AG04449 (cell line): ENCODE measurements at regions of chr19 and their contacts with region 1.

Region 1: DNA sequence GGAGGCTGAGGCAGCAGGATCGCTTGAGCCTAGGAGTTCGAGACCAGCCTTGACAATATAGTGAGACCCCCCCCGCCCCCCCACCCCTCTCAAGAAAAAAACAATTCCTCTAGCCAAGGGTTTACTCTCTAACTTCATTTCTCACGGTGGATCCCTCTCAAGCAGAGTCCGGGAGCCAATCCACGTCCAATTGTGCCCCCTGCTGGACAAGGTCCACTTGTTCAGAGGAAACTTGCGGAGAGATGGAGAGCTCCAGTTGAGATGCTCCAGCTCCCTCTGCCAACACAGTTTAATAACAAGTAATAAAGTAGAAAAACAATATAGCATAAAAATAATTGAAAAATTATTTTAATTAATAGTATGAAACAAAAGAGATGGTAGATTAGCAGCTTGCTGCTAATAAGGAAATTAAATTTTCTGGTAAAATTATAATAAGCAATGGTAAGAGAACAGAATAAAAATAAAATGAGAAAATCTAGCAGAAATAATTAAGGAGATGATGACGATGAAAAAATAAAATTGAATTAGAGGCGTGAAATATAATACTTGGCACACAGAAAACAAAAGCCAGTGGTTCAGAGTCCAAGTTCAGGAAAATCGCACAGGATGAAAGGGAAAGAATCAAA is 14.5 kb upstream of the SIGLEC14 start:
- DNase-seq: peak; percentile 10
- H3K4me3 ChIP-seq: no peak overlapping the region
- CTCF ChIP-seq: peak; percentile 83

Region 2: GRCh38 chr19:51422053-51422448 is 239.0 kb before region 1 on chr19:
- CTCF ChIA-PET with region 1: interaction called, 16 read pairs
- POLR2A ChIA-PET with region 1: no interaction called
- DNase-seq: no peak
- H3K4me3 ChIP-seq: no peak overlapping the region
- CTCF ChIP-seq: peak; percentile 96

Region 3: GRCh38 chr19:51473009-51473707 is 187.9 kb before region 1 on chr19:
- CTCF ChIA-PET with region 1: interaction called, 184 read pairs
- POLR2A ChIA-PET with region 1: no interaction called
- DNase-seq: no peak
- H3K4me3 ChIP-seq: no peak overlapping the region
- CTCF ChIP-seq: peak; percentile 85

Region 4: DNA sequence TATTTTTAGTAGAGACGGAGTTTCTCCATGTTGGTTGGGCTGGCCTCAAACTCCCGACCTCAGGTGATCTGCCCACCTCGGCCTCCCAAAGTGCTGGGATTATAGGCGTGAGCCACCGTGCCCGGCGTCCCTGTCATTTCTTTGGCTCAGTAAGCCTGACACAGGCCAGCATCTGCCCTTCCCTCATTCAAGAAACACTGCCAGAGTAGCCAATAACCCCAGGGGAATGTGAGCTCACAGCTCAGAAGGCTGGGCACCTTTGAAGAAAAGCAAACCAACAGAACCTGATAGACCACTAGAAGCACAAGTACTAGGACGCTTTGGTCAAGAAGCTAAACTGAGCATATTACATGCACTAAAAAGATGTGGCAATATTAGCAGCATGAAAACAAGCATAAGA is 45.1 kb before region 1 on chr19:
- CTCF ChIA-PET with region 1: no interaction called
- POLR2A ChIA-PET with region 1: no interaction called
- DNase-seq: no peak
- H3K4me3 ChIP-seq: no peak overlapping the region
- CTCF ChIP-seq: no peak

Region 5: GRCh38 chr19:51681321-51682168 is 20.5 kb after region 1 on chr19:
- CTCF ChIA-PET with region 1: interaction called, 49 read pairs
- POLR2A ChIA-PET with region 1: no interaction called
- DNase-seq: no peak
- H3K4me3 ChIP-seq: no peak overlapping the region
- CTCF ChIP-seq: no peak

Region 6: GRCh38 chr19:51688672-51689571 is 27.8 kb after region 1 on chr19:
- CTCF ChIA-PET with region 1: interaction called, 49 read pairs
- POLR2A ChIA-PET with region 1: interaction called, 4 read pairs
- DNase-seq: peak; percentile 80
- H3K4me3 ChIP-seq: peak overlapping the region; percentile 96
- CTCF ChIP-seq: no peak

Region 7: GRCh38 chr19:51777570-51778462 is 116.7 kb after region 1 on chr19:
- CTCF ChIA-PET with region 1: interaction called, 41 read pairs
- POLR2A ChIA-PET with region 1: no interaction called
- DNase-seq: peak; percentile 14
- H3K4me3 ChIP-seq: no peak overlapping the region
- CTCF ChIP-seq: peak; percentile 65